ENCODE measurements at regions of chr18 and their contacts with region 1.

Region 1: DNA sequence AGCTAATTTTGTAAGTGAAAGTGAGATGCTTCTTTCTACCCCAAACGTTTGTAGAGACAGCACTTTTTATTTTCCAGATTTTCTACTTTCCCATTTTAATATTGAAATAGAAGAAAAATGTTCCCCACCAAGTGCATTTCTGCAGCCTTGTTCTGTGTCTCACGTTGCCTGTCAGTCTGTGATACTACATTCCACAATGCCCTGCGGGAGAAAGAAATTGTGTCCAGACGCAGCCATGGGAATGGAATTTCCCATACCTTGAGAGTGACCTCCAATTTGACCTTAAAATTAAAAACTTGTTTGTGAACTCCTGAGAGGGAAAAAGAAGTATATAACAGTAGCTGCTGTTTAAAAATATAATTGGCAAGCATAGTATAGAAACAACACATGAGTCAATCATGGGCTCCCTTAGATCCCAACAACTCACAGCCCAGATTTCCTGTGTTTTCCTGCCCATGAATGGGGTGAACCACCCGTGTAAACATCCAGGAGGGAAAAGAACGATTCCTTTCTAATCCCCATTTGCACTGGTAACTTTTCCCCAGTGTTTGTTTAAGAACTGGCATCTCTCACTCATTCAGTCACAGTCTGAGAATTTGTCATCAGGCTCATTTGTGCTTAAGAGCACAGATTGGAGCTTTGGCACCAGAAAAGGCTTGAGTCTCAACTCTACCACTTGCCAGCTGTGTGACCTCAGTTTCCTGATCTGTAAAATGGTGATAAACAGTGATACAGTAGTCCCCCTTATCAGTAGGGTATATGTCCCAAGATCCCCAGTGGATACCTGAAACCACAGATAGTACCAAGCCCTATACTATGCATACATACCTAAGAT is 166.1 kb upstream of the ZNF521 start:
- DNase-seq: peak; percentile 55
- H3K4me3 ChIP-seq: peak overlapping the region; percentile 45
- H3K27ac ChIP-seq: peak overlapping the region; percentile 90
- H3K4me1 ChIP-seq: peaks cover 56% of the 10 kb centered on the region
- CTCF ChIP-seq: no peak

Region 2: DNA sequence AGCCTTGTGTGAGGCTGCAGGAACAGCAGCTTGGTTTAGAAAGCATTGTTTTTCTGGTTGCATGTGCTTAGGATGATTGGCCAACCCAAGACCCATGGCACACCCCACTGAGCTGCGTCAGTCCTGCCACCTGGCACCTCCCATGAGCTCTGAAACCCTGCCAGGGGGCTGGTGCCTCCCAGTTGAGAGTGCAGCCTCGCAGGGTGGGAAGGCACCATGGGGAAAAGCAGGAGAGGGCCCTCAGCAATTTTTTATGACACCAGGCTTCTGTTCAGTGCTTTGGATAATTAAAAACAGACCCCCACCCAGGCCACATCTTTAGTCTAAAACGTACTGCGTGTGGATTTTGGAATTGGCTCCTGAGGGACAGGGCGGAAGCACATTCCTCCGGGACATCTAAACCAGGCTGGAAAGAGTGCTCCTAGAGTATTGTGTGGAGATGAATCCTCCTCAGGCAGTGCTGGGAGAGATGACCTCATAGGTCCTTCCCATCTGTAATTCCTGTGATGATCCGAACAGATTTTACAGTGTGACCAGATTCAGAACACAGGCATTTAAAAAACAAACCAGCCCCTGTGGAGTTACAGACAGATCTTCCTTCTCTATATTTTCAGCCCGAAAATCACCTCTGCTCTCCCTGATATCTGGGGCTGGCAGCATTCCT is 604.5 kb before region 1 on chr18:
- CTCF ChIA-PET with region 1: no interaction called
- POLR2A ChIA-PET with region 1: no interaction called
- intact Hi-C with region 1: loop called (anchors 10 kb)
- DNase-seq: no peak
- H3K4me3 ChIP-seq: no peak overlapping the region
- H3K27ac ChIP-seq: no peak overlapping the region
- H3K4me1 ChIP-seq: peaks cover 53% of the 10 kb centered on the region
- CTCF ChIP-seq: no peak

Region 3: GRCh38 chr18:25533218-25533617 is 15.1 kb after region 1 on chr18:
- CTCF ChIA-PET with region 1: no interaction called
- POLR2A ChIA-PET with region 1: interaction called, 19 read pairs
- intact Hi-C with region 1: no loop called
- DNase-seq: peak; percentile 30
- H3K4me3 ChIP-seq: no peak overlapping the region
- H3K27ac ChIP-seq: no peak overlapping the region
- H3K4me1 ChIP-seq: peaks cover 27% of the 10 kb centered on the region
- CTCF ChIP-seq: no peak